Activated CD4-positive, alpha-beta T cell treated with anti-CD3 and anti-CD28 coated beads for 36 hours (primary cell): ENCODE measurements at regions of chr5 and their contacts with region 1.

Region 1: DNA sequence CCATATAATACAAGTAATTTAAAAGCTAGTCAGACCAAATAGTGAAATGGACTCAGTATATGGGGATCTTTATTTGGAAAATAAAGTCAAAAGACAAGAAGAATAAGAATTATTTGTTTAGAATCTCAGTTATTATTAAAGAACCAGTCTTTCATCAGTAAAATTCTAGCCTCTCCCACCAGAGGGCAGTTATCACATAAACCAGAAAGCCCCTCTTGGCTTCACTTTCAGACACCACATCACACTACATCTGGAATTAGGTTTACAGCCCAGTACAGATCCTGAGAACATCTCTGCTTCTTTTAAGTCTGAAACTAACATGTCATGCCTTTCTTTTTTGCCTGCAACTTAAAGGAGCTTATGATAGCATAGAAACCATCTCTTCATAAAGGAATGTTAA is 12.2 kb upstream of the HSPB3 start:
- DNase-seq: no peak
- ATAC-seq: no peak
- H3K4me3 Mint-ChIP-seq: no peak overlapping the region
- H3K27ac Mint-ChIP-seq: no peak overlapping the region
- H3K4me1 Mint-ChIP-seq: peaks cover 17% of the 10 kb centered on the region
- H3K27me3 Mint-ChIP-seq: no peaks in the 10 kb centered on the region

Region 2: DNA sequence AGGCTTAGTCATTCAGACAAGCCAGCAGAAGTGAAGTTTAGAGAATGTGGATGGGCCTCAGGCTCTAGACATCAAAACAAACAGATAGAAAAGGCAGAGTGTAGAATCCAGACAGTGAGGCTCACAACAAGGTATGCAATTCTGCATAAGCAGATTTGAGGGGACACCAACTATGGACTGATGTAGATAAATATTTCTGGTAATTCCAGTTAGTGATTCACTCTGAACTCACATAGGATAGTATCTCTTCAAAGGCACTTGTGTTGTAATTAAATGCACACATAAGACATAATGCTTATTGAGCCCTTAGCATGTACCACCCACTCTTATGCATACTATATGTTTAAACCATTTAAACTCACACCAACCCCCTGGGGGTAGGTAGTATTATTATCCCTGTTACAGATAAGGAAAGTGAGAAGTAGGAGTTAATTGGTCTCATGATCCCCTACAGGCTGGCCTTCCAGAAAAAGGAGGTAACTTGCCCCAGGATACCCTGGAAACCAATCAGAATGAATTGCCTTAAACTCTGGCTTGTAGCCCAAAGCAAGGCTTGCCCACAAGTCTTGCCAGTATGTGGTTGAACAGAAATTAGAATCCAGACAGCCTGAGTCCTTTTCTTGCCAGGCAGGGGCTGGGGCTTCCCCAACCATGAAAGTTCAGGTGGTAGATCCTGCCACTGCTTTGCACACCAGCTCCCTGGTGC is 27.2 kb before region 1 on chr5:
- CTCF ChIA-PET with region 1: interaction called, 10 read pairs
- POLR2A ChIA-PET with region 1: no interaction called
- intact Hi-C with region 1: no loop called
- DNase-seq: no peak
- ATAC-seq: no peak
- H3K4me3 Mint-ChIP-seq: no peak overlapping the region
- H3K27ac Mint-ChIP-seq: no peak overlapping the region
- H3K4me1 Mint-ChIP-seq: no peaks in the 10 kb centered on the region
- H3K27me3 Mint-ChIP-seq: peaks cover 6% of the 10 kb centered on the region